Activated naive CD4-positive, alpha-beta T cell treated with anti-CD3 and anti-CD28 coated beads for 36 hours (primary cell): ENCODE measurements at regions of chr19 and their contacts with region 1.

Region 1: DNA sequence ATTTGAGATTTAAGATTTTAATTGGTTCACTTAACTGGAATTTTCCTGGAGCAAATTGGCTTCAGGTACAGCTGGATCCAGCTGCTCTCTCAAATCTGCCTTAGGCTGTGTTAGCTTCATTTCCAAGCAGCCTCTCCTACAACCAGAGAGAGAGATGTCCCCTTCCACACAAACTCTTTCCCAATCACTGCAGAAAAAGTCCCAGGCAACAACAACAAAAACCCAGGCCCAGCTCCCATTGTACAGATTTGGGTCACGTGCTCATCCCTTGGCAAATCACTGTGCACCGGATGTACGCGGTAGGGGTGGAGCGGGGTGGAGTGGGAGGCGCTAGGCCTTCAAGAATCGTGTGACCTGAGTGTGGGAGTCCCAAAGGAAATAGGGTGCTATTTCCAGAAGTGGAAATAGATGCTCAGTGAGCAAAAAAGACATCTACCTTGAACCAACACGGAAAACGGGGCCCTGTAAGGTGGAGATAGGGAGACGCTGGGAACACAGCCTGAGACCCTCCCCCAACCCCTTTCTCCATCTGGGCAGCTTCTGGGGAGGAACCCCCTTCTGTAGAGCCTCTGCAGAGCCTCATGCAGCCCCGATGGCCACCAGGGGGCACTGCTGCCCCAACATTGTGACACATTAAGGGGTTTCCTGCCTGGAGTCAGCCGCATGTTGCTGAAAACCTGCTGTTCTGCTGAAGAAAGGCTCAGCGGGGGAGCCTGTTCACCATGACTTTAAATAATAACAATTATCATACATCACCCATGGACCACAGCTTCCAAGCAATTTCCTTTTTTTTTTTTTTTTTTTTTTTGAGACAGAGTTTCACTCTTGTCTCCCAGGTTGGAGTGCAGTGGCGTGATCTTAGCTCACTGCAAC is 25.4 kb downstream of the HPN start:
- DNase-seq: peak; percentile 96
- H3K4me3 Mint-ChIP-seq: peak overlapping the region; percentile 22
- H3K27ac Mint-ChIP-seq: peak overlapping the region; percentile 46
- H3K4me1 Mint-ChIP-seq: peaks cover 24% of the 10 kb centered on the region
- H3K27me3 Mint-ChIP-seq: no peaks in the 10 kb centered on the region

Region 2: DNA sequence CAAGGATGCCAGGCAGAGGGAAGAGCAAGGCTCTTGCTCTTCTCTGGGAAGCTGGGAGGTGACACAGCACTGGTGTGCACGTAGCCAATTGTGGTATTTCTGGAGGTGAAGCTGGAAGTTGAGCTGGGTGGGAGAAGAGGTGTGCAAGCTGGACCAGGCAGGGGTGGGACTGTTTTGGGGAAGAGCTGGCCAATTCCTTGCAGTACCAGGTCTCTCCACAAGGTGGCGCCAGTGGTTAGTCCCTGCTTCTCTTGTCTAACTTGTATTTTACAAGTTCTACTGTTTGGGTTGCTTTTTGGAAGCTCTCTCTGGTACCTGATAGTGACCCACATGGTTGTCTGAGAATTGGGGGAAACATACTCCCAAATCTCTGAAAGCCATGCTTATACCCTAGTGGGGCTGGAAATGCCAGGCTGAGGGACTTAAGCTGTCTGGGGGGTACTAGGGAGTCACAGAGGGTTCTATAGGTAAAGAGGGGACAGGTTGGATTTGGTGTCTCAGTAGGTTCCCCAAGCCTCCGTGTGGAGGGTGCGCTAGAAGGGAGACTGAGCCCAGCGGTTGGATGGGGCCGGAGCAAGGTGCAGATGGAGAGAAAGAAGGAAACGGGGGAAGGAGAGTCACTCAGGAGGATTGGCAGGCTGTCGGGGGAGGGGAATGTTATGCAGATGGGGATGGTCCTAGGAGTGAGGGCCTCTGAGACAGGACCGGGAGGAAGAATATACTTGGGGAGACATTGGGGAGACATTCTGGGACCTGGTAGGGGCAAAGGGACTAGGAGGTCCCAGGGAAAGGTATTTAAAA is 22.4 kb before region 1 on chr19:
- CTCF ChIA-PET with region 1: interaction called, 17 read pairs
- intact Hi-C with region 1: loop called (anchors 1 kb)
- DNase-seq: peak; percentile 83
- H3K4me3 Mint-ChIP-seq: no peak overlapping the region
- H3K27ac Mint-ChIP-seq: peak overlapping the region; percentile 58
- H3K4me1 Mint-ChIP-seq: peaks cover 39% of the 10 kb centered on the region
- H3K27me3 Mint-ChIP-seq: peaks cover 8% of the 10 kb centered on the region

Region 3: GRCh38 chr19:35090506-35091237 is 23.7 kb after region 1 on chr19:
- CTCF ChIA-PET with region 1: interaction called, 24 read pairs
- intact Hi-C with region 1: loop called (anchors 1 kb)
- DNase-seq: peak; percentile 64
- H3K4me3 Mint-ChIP-seq: no peak overlapping the region
- H3K27ac Mint-ChIP-seq: no peak overlapping the region
- H3K4me1 Mint-ChIP-seq: peaks cover 1% of the 10 kb centered on the region
- H3K27me3 Mint-ChIP-seq: peaks cover 5% of the 10 kb centered on the region

Region 4: DNA sequence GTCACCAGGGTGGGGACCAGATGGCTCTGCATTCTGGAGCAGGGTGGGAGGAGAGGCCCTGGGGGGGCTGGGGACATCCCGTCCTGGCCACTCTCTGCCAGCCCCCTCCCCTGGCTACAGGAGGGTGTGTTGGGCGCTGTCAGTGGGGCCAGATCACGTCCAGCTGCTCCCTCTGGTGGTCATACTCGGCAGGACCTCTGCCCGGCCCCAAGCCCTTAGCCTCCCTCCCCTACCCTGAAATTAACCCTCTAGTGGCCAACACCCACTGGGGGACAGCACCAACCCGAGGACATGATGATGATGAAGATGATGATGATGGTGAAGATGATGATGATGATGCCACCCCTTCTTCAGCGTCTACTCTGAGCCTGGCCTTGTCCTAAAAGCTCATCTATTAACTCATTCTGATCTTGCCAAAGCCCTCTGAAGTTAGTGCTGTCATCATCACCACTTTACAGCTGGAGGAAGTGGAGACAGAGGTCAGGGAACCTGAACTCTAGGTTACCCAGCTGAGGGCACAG is 68.5 kb after region 1 on chr19:
- CTCF ChIA-PET with region 1: interaction called, 35 read pairs
- intact Hi-C with region 1: loop called (anchors 1 kb)
- DNase-seq: peak; percentile 79
- H3K4me3 Mint-ChIP-seq: no peak overlapping the region
- H3K27ac Mint-ChIP-seq: no peak overlapping the region
- H3K4me1 Mint-ChIP-seq: no peaks in the 10 kb centered on the region
- H3K27me3 Mint-ChIP-seq: no peaks in the 10 kb centered on the region

Region 5: DNA sequence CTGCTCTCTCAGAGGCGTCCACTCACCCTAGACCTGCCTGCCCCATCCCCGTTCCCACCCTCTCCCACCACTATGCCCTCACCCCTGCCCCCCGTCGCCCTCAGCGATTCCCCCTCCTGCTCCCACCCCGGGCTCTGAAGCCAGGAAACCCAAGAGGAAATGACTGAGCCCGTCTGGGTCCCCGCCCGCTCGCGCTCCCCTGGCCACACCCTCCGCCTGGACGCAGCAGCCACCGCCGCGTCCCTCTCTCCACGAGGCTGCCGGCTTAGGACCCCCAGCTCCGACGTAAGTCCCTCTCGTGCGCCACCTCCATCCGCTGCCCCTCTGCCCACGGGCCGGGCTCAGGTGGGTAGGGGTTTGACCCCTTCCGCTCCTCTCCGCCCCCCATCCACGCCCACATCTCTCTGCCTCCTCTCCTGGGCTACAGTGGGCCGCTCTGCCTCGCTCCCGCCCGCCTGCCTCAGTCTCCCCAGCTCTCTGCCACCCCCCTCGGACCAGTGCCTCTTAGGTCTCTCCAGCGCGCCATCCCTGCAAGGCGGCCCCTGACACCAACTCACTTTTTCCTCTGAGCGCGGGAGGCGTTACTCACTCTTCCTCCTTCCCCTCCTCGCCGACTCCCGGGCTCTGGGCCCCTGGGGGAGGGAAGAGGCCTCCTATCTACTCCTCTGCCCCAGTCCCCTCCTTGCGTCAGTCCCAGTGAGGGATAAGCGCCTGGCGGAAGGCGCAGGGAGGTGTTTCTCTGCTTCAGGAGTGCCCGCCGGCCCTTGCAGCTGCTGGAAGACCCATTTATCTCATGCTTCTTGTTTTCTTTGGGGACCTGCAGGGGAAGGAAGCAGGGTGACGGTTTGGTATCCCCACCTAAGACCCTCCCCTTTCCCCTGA is 87.8 kb after region 1 on chr19 and contains the start of gene FXYD5:
- CTCF ChIA-PET with region 1: interaction called, 10 read pairs
- intact Hi-C with region 1: no loop called
- DNase-seq: peak; percentile 93
- H3K4me3 Mint-ChIP-seq: peak within 1 kb of the TSS; percentile 98
- H3K27ac Mint-ChIP-seq: peak within 1 kb of the TSS; percentile 99
- H3K4me1 Mint-ChIP-seq: peaks cover 47% of the 10 kb centered on the region
- H3K27me3 Mint-ChIP-seq: no peaks in the 10 kb centered on the region
- total RNA-seq, gene FXYD5: 289 to 294 TPM

Region 6: GRCh38 chr19:35213663-35214632 is 147.0 kb after region 1 on chr19:
- CTCF ChIA-PET with region 1: interaction called, 5 read pairs
- intact Hi-C with region 1: loop called (anchors 1 kb)
- DNase-seq: peak; percentile 92
- H3K4me3 Mint-ChIP-seq: no peak overlapping the region
- H3K27ac Mint-ChIP-seq: peak overlapping the region; percentile 97
- H3K4me1 Mint-ChIP-seq: peaks cover 58% of the 10 kb centered on the region
- H3K27me3 Mint-ChIP-seq: no peaks in the 10 kb centered on the region